Heart left ventricle (tissue), 16 donors: ENCODE measurements at regions of chr10 and their contacts with region 1.

Region 1: GRCh38 chr10:74081192-74081803 is 69.3 kb downstream of the AP3M1 start:
- DNase-seq: peak in 2 of 5 donors; percentile 42 to 48
- ATAC-seq: peak; percentile 30 to 73 (median 68)
- H3K4me3 ChIP-seq: no peak overlapping the region
- H3K27ac ChIP-seq: peak overlapping the region in 3 of 12 donors; percentile 6 to 53 (median 14)
- H3K4me1 ChIP-seq: peaks cover 10 to 54% (median 28%) of the 10 kb centered on the region in 12 donors
- H3K27me3 ChIP-seq: no peaks in the 10 kb centered on the region
- CTCF ChIP-seq: peak; percentile 59 to 87 (median 78)
- POLR2A ChIP-seq: no peak

Region 2: DNA sequence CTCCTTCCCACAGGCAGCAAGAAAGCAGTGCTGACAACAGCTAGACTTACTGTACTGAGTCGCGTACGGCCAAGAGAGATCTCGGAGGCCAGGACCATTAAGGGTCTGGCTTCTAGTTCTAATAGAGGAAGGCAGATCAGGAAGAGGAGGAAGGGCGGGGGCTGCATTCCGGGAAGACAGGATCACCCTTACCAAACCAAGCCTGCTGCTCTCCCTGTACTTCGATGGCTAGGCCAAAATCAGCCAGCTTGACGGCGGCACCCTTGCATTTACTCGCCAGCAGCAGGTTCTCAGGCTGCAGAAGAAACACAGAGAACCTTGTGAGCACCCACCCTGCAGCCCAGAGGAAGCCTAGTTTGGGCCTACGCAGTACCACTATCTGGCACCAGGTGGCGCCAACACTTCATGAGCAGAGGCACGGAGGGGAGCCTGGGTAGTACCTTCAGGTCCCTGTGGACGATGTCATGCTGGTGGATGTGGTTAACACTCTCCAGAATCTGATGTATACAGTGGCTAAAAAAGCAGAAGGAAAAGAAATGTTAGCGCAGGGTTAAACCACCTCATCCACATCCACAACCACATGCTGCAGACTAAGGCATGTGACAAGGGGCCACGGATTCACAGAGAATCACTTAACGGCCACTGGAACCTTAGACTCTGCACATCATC is 232.3 kb before region 1 on chr10:
- intact Hi-C with region 1: loop called in 1 of 10 experiments (anchors 10 kb)
- DNase-seq: peak; percentile 81 to 91 (median 84)
- ATAC-seq: peak; percentile 80 to 93 (median 92)
- H3K4me3 ChIP-seq: peak overlapping the region in 6 of 12 donors; percentile 8 to 29 (median 16)
- H3K27ac ChIP-seq: peak overlapping the region; percentile 7 to 88 (median 61)
- H3K4me1 ChIP-seq: peaks cover 0 to 29% (median 14%) of the 10 kb centered on the region in 12 donors
- H3K27me3 ChIP-seq: no peaks in the 10 kb centered on the region
- CTCF ChIP-seq: peak; percentile 99 to 100 (median 100)
- POLR2A ChIP-seq: no peak

Region 3: DNA sequence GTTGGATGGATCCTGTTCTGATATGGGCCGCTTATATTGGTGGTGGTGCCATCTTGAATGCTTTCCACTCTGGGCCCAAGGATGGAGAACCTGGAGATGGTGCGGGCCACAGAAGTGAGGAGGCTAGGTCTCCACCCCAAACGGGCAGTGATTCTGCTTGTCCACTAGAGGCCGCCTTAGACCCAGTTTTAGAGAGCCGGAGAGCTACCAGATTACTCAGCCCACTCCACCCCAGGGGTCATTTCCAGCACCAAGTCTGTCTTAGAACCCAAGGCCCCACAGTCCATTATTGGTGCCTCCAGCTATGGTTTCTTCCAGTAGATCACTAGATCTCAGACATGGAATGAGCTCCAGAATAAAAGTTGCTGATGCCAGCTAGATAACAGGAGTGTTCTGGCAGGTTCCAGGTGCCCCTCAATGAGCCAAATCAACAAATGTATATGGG is 195.2 kb before region 1 on chr10:
- intact Hi-C with region 1: loop called (anchors 1 to 5 kb)
- DNase-seq: peak; percentile 74 to 86 (median 82)
- ATAC-seq: peak; percentile 74 to 85 (median 84)
- H3K4me3 ChIP-seq: no peak overlapping the region
- H3K27ac ChIP-seq: peak overlapping the region in 11 of 12 donors; percentile 79 to 91 (median 86)
- H3K4me1 ChIP-seq: peaks cover 20 to 35% (median 31%) of the 10 kb centered on the region in 12 donors
- H3K27me3 ChIP-seq: no peaks in the 10 kb centered on the region
- CTCF ChIP-seq: peak; percentile 69 to 92 (median 88)
- POLR2A ChIP-seq: no peak

Region 4: DNA sequence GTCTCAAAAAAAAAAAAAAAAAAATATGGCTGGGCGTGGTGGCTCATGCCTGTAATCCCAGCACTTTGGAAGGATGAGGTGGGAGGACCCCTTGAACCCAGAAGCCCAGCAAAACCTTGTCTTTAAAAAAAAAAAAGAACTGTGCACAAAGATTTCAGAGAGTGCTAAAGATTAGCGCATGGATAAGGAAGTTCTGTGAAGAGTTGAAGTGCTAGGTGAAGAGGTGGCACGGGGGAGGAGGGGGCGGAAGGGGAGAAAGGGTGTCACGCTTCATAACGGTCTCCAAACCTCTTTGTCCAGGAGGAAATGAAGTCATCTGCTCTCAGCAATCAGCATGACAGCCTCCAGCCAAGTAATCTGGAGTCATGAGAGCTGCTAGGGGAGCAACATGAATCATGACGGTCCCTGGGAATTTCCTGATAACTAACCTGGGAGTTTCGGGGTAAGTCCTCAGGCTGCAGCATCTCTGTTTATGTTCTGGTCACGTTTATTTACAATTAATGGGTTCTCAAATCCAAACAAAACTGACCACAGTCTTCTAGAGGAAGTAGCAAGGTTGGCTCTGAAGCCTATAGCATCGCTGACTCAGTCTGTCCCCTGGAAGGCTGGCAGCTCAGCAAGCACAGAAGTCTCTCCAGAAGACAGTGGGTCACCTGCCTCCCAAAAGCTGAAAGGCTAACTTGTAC is 172.3 kb before region 1 on chr10:
- intact Hi-C with region 1: no loop called
- DNase-seq: peak in 4 of 5 donors; percentile 56 to 70 (median 65)
- ATAC-seq: peak in 3 of 4 donors; percentile 32 to 66 (median 45)
- H3K4me3 ChIP-seq: peak overlapping the region in 3 of 12 donors; percentile 11 to 18 (median 13)
- H3K27ac ChIP-seq: peak overlapping the region in 11 of 12 donors; percentile 19 to 96 (median 72)
- H3K4me1 ChIP-seq: peaks cover 0 to 82% (median 53%) of the 10 kb centered on the region in 12 donors
- H3K27me3 ChIP-seq: no peaks in the 10 kb centered on the region
- CTCF ChIP-seq: no peak
- POLR2A ChIP-seq: no peak

Region 5: GRCh38 chr10:73946253-73947155 is 134.8 kb before region 1 on chr10:
- intact Hi-C with region 1: loop called in 7 of 10 experiments (anchors 5 to 10 kb)
- DNase-seq: peak in 1 of 5 donors; percentile 53
- ATAC-seq: no peak
- H3K4me3 ChIP-seq: no peak overlapping the region
- H3K27ac ChIP-seq: no peak overlapping the region
- H3K4me1 ChIP-seq: peaks cover 0 to 4% (median 0%) of the 10 kb centered on the region in 12 donors
- H3K27me3 ChIP-seq: no peaks in the 10 kb centered on the region
- CTCF ChIP-seq: no peak
- POLR2A ChIP-seq: no peak

Region 6: DNA sequence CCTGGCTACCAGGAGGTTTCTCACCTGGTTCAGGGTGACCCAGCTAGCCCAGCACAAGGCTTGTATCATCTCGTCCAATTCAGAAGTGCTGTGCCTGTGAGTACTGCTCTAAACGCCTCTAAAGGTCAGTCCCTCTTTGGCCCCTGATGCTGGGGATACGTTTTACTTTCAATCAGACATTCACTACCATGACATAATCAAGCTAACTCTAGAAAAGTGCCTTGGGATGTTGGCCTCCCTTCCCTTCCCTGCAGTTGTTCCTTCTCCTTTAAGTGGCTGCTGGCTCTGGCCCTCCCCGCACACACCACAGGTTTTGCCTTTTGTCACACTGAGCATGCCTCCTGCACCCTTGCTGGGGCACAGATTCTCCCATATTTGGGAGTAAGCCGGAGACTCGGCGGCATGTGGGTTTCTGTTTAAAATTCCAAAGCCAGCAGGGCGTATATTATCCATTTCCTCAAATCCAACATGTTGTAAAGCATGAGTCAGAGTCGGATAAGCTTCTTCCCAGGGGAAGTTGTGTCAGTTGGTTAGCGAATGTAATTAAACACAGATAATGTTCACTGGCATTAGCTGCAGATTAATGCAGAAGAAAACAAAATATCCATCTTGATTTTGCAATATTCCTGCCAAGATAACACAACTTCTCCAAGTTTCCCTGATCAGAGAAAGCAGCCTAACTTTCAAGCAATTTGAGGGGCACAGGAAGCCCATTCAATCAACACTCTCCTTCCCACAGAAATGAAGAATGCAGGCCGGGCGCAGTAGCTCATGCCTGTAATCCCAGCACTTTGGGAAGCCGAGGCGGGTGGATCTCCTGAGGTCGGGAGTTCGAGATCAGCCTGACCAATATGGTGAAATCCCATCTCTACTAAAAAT is 115.2 kb before region 1 on chr10:
- intact Hi-C with region 1: loop called in 1 of 10 experiments (anchors 5 kb)
- DNase-seq: peak; percentile 82 to 89 (median 84)
- ATAC-seq: peak; percentile 83 to 97 (median 96)
- H3K4me3 ChIP-seq: peak overlapping the region in 9 of 12 donors; percentile 6 to 37 (median 20)
- H3K27ac ChIP-seq: peak overlapping the region; percentile 68 to 92 (median 86)
- H3K4me1 ChIP-seq: peaks cover 0 to 36% (median 25%) of the 10 kb centered on the region in 12 donors
- H3K27me3 ChIP-seq: no peaks in the 10 kb centered on the region
- CTCF ChIP-seq: no peak
- POLR2A ChIP-seq: peak in 1 of 2 donors; percentile 57

Region 7: DNA sequence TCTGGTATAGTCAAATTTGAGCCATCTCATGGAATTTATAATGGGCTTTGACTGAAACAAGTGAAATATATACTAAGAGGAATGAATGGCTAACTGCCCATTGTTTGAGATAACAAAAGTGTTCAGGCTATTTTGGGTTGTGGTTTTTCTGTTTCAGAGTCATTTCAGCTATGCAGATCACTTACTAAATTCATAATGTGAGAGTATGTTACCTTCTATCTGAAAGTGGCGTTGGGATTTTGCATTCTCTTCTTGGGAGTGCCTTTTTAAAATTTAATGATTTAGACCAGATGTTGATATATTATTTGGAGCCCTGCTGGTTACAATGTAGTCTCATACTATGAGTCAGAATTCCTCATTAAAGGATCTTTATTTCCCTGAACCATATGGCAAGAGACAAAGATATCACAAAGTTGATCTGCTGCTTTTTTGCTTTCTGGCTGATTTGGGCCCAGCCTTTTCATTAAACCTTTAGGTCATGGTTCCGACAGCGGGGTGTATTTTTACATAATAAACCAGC is 73.0 kb before region 1 on chr10:
- intact Hi-C with region 1: loop called in 2 of 10 experiments (anchors 5 to 10 kb)
- DNase-seq: no peak
- ATAC-seq: peak in 1 of 4 donors; percentile 29
- H3K4me3 ChIP-seq: no peak overlapping the region
- H3K27ac ChIP-seq: peak overlapping the region in 10 of 12 donors; percentile 9 to 83 (median 60)
- H3K4me1 ChIP-seq: peaks cover 19 to 86% (median 55%) of the 10 kb centered on the region in 12 donors
- H3K27me3 ChIP-seq: no peaks in the 10 kb centered on the region
- CTCF ChIP-seq: no peak
- POLR2A ChIP-seq: no peak